ENCODE measurements at regions of chr5 and their contacts with region 1.

Region 1: DNA sequence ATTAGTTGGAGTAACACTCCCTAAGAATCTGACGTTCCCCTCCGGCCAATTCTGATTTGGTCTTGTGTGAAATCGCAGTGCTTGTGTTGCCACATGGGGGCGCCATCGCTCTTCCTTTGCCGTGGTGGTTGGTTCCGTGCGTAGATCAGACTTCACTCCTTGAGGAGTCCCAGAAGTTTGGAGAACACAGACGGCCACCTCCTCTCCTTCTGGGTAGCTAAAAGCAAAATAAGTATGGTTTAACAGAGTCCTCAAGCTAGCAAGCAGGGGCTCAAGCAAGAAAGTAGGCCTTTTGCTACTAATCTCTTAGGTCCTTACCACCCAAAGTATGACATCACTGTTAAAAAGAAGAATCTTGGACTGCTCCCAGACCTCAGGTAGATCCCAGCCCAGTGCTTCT is 59.5 kb downstream of the HSPA4 start:
- DNase-seq: peak; percentile 75 to 90 (median 79)
- ATAC-seq: peak; percentile 39 to 80 (median 70)
- H3K4me3 ChIP-seq: no peak overlapping the region
- H3K27ac ChIP-seq: no peak overlapping the region
- H3K4me1 ChIP-seq: peaks cover 0 to 8% (median 0%) of the 10 kb centered on the region in 12 donors
- H3K27me3 ChIP-seq: no peaks in the 10 kb centered on the region
- CTCF ChIP-seq: peak; percentile 81 to 92 (median 88)
- POLR2A ChIP-seq: no peak

Region 2: GRCh38 chr5:133247881-133248624 is 136.8 kb after region 1 on chr5:
- intact Hi-C with region 1: loop called in 8 of 10 experiments (anchors 1 to 5 kb)
- DNase-seq: peak in 2 of 5 donors; percentile 29 to 42
- ATAC-seq: peak in 3 of 4 donors; percentile 59 to 75 (median 75)
- H3K4me3 ChIP-seq: no peak overlapping the region
- H3K27ac ChIP-seq: no peak overlapping the region
- H3K4me1 ChIP-seq: no peaks in the 10 kb centered on the region
- H3K27me3 ChIP-seq: no peaks in the 10 kb centered on the region
- CTCF ChIP-seq: peak in 11 of 12 donors; percentile 24 to 62 (median 40)
- POLR2A ChIP-seq: no peak

Region 3: GRCh38 chr5:133287500-133287899 is 176.2 kb after region 1 on chr5:
- intact Hi-C with region 1: loop called in 7 of 10 experiments (anchors 2 to 10 kb)
- DNase-seq: peak in 1 of 5 donors; percentile 64
- ATAC-seq: peak in 1 of 4 donors; percentile 40
- H3K4me3 ChIP-seq: no peak overlapping the region
- H3K27ac ChIP-seq: no peak overlapping the region
- H3K4me1 ChIP-seq: peaks cover 0 to 7% (median 0%) of the 10 kb centered on the region in 12 donors
- H3K27me3 ChIP-seq: no peaks in the 10 kb centered on the region
- CTCF ChIP-seq: peak in 9 of 12 donors; percentile 18 to 51 (median 28)
- POLR2A ChIP-seq: no peak

Region 4: GRCh38 chr5:133610489-133611356 is 499.4 kb after region 1 on chr5:
- intact Hi-C with region 1: loop called in 3 of 10 experiments (anchors 2 to 10 kb)
- DNase-seq: peak; percentile 52 to 80 (median 66)
- ATAC-seq: peak; percentile 59 to 98 (median 94)
- H3K4me3 ChIP-seq: peak overlapping the region in 9 of 12 donors; percentile 17 to 46 (median 38)
- H3K27ac ChIP-seq: no peak overlapping the region
- H3K4me1 ChIP-seq: peaks cover 10 to 31% (median 16%) of the 10 kb centered on the region in 12 donors
- H3K27me3 ChIP-seq: peaks cover 12 to 88% (median 48%) of the 10 kb centered on the region in 9 donors
- CTCF ChIP-seq: peak; percentile 16 to 71 (median 56)
- POLR2A ChIP-seq: no peak

Region 5: DNA sequence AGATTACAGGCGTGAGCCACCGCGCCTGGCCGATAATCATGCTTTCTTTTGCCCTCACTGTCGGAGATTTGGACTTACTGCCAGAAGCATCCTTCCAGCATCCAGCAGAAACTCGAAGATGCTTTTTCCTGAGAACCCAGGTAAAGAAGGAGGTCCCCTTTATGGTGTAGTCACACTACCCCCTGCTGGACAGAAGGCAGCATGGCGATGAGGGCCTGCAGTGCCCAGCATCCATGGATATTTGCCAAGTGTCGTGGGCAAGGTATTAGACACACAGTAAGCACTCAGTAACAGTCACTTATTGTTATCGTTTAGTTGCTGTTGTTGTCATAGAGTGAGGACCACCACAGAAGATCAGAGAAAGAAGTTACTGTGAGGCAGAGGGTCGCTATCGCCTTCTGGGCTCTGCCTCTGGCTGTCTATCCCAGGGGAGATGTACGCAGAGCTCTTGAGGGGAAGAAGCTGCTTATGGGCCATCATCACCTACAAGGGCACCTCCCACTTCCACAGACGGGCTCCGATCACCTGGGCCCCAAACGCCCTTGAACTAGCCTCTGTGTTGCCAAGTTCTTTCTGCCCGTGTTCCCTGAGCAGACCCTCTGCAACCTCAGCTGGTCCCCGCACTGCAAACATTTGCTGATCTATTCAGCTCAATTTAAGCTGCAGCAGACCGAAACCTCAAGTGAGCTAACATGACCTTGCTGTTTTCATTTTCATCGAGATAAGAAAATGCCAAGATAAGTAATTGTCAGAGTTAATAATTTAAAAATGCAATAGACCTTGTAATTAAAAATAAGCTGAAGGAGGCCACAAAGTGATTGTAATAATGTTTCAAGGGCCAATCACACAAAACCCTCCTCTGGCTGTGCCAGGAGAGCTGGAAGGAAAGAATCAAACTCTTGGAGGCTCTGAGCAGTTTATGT is 833.2 kb after region 1 on chr5:
- intact Hi-C with region 1: loop called in 4 of 10 experiments (anchors 2 to 10 kb)
- DNase-seq: peak in 2 of 5 donors; percentile 35 to 41
- ATAC-seq: peak in 3 of 4 donors; percentile 61 to 70 (median 67)
- H3K4me3 ChIP-seq: no peak overlapping the region
- H3K27ac ChIP-seq: no peak overlapping the region
- H3K4me1 ChIP-seq: peaks cover 0 to 8% (median 0%) of the 10 kb centered on the region in 12 donors
- H3K27me3 ChIP-seq: no peaks in the 10 kb centered on the region
- CTCF ChIP-seq: peak; percentile 36 to 66 (median 52)
- POLR2A ChIP-seq: no peak

Measured in heart left ventricle (tissue), 16 donors.